Lower leg skin (tissue), 4 donors: ENCODE measurements at regions of chr15 and their contacts with region 1.

Region 1: GRCh38 chr15:99275525-99276128 is 24.3 kb downstream of the LRRC28 start:
- DNase-seq: no peak
- H3K4me3 ChIP-seq: no peak overlapping the region
- CTCF ChIP-seq: no peak
- POLR2A ChIP-seq: no peak

Region 2: GRCh38 chr15:99409097-99409473 is 133.5 kb after region 1 on chr15:
- intact Hi-C with region 1: no loop called
- DNase-seq: peak; percentile 74 to 93
- H3K4me3 ChIP-seq: no peak overlapping the region
- CTCF ChIP-seq: no peak
- POLR2A ChIP-seq: no peak

Region 3: GRCh38 chr15:99749386-99749785 is 473.8 kb after region 1 on chr15:
- intact Hi-C with region 1: loop called (anchors 10 kb)
- DNase-seq: no peak
- H3K4me3 ChIP-seq: no peak overlapping the region
- CTCF ChIP-seq: no peak
- POLR2A ChIP-seq: no peak

Region 4: DNA sequence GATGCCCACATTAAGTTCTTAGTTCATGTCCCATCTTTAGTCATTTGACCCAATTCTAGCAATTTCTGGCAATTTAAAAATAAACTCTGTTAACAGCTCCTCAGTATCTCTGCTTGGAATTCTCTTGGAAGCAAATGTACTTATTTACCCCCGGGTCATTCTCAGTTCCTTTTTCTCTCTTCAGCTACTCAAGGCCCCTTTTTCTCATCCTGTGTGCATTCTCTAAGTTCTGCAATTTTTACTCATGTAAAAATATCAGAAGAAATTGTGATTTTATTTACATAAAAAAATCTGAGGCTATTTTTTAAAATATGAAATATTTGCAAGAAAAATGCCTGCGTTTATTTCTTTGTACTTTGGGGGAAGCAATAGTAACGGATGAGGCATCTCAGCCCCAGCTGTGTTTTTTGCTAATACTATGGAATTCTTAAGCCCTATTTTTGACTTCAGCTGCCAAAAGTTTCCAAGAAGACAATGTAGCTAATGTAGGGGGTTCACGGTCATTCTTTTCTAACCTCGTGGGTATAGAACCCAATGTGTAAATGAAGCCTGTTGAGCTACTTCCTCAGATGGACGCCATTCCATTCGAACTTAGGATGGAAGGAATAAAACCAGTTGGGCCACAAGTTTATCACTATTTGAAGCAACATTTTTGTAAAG is 1233.1 kb after region 1 on chr15:
- intact Hi-C with region 1: no loop called
- DNase-seq: no peak
- H3K4me3 ChIP-seq: no peak overlapping the region
- CTCF ChIP-seq: no peak
- POLR2A ChIP-seq: no peak